Gastrocnemius medialis (tissue), 4 donors: ENCODE measurements at regions of chr19 and their contacts with region 1.

Region 1: DNA sequence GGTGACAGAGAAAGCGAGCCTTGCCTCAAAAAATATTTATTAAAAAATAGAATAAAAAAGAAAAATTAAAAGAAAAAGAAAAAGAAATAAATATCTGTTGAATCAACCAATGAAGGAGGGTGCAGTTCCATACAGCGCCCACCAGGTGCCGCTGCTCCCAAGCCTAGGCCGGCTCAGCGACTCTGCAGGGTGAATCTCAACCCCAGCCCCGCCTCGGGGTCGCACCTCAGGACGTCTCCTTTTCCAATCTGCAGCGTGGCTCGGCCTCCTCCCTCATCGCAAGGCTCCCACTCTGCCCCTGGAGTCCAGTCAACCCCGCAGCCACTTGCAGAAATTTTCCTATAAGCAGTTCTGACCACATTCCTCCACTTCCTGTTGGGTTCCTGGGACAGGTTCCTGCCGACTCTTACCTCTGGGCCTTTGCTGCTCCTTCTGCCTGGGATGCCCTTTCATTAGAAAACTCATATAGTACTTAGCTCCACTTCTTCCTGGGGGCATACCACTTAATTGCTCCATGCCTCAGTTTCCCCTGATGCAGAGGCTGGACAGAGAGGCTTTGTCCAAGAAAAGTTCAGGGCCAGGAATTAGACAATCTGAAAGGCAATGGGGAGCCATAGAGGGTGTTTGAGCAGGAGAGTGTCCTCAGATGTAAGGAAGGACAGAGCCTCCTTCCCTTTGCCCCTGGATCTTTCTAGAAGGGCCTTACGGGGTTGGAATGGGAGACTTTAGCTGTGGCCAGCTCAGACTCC is 24.3 kb downstream of the NFILZ start:
- DNase-seq: no peak
- ATAC-seq: no peak
- H3K4me3 ChIP-seq: no peak overlapping the region
- H3K27ac ChIP-seq: no peak overlapping the region
- H3K4me1 ChIP-seq: no peaks in the 10 kb centered on the region
- H3K27me3 ChIP-seq: no peaks in the 10 kb centered on the region
- CTCF ChIP-seq: peak in 4 of 5 experiments; percentile 50 to 87 (median 72)
- POLR2A ChIP-seq: no peak

Region 2: GRCh38 chr19:9075064-9075949 is 420.5 kb after region 1 on chr19:
- in situ Hi-C with region 1: loop called in 2 of 4 experiments (anchors 10 to 25 kb)
- intact Hi-C with region 1: no loop called
- DNase-seq: no peak
- ATAC-seq: no peak
- H3K4me3 ChIP-seq: no peak overlapping the region
- H3K27ac ChIP-seq: no peak overlapping the region
- H3K4me1 ChIP-seq: no peaks in the 10 kb centered on the region
- H3K27me3 ChIP-seq: no peaks in the 10 kb centered on the region
- CTCF ChIP-seq: no peak
- POLR2A ChIP-seq: no peak

Region 3: GRCh38 chr19:9086761-9087160 is 432.0 kb after region 1 on chr19 and contains the start of gene OR1M1:
- in situ Hi-C with region 1: loop called in 2 of 4 experiments (anchors 10 to 25 kb)
- intact Hi-C with region 1: no loop called
- DNase-seq: no peak
- ATAC-seq: no peak
- H3K4me3 ChIP-seq: no peak within 1 kb of the TSS
- H3K27ac ChIP-seq: no peak within 1 kb of the TSS
- H3K4me1 ChIP-seq: no peaks in the 10 kb centered on the region
- H3K27me3 ChIP-seq: no peaks in the 10 kb centered on the region
- CTCF ChIP-seq: no peak
- POLR2A ChIP-seq: no peak
- total RNA-seq, gene OR1M1: not detected